A673 (cell line): ENCODE measurements at regions of chr11 and their contacts with region 1.

Region 1: GRCh38 chr11:19561011-19561410 is 151.6 kb upstream of the NAV2 start:
- DNase-seq: no peak
- H3K4me3 ChIP-seq: no peak overlapping the region
- H3K27ac ChIP-seq: no peak overlapping the region
- H3K4me1 ChIP-seq: no peaks in the 10 kb centered on the region
- H3K27me3 ChIP-seq: peaks cover 9% of the 10 kb centered on the region
- CTCF ChIP-seq: no peak

Region 2: GRCh38 chr11:19742588-19743292 is 181.7 kb after region 1 on chr11:
- CTCF ChIA-PET with region 1: interaction called, 5 read pairs
- POLR2A ChIA-PET with region 1: no interaction called
- intact Hi-C with region 1: loop called (anchors 1 kb)
- DNase-seq: peak; percentile 57
- H3K4me3 ChIP-seq: no peak overlapping the region
- H3K27ac ChIP-seq: no peak overlapping the region
- H3K4me1 ChIP-seq: no peaks in the 10 kb centered on the region
- H3K27me3 ChIP-seq: no peaks in the 10 kb centered on the region
- CTCF ChIP-seq: peak; percentile 71

Region 3: GRCh38 chr11:19800162-19800561 is 239.2 kb after region 1 on chr11:
- CTCF ChIA-PET with region 1: no interaction called
- POLR2A ChIA-PET with region 1: no interaction called
- intact Hi-C with region 1: loop called (anchors 10 kb)
- DNase-seq: no peak
- H3K4me3 ChIP-seq: no peak overlapping the region
- H3K27ac ChIP-seq: no peak overlapping the region
- H3K4me1 ChIP-seq: no peaks in the 10 kb centered on the region
- H3K27me3 ChIP-seq: no peaks in the 10 kb centered on the region
- CTCF ChIP-seq: 0 out of 2 replicates have a peak, but pooled peaks have one; percentile 17

Region 4: DNA sequence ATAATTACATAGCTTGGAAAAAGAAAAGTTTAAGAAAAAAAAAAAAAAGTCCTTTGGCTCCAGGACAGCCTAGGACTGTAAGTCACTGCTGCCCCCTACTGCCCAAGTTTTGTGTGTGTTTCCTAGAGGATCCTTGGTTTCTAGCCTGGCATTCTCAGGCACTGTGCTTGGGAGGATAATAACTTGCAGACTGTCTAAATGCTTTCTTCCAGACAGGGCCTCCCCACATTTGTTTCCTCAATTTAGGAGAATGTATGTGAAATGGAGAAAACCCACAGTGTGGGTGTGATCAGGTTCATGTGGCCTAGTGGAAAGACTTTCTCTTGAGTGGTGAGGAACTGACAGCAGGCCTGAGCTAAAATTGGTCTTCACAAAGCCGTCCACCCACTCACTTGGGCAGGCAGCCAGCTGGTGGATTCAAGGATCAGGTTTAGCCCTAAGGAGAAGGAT is 342.6 kb after region 1 on chr11:
- CTCF ChIA-PET with region 1: interaction called, 3 read pairs
- POLR2A ChIA-PET with region 1: no interaction called
- intact Hi-C with region 1: loop called (anchors 1 kb)
- DNase-seq: peak; percentile 67
- H3K4me3 ChIP-seq: no peak overlapping the region
- H3K27ac ChIP-seq: no peak overlapping the region
- H3K4me1 ChIP-seq: no peaks in the 10 kb centered on the region
- H3K27me3 ChIP-seq: no peaks in the 10 kb centered on the region
- CTCF ChIP-seq: peak; percentile 75